ENCODE measurements at regions of chr18 and their contacts with region 1.

Region 1: DNA sequence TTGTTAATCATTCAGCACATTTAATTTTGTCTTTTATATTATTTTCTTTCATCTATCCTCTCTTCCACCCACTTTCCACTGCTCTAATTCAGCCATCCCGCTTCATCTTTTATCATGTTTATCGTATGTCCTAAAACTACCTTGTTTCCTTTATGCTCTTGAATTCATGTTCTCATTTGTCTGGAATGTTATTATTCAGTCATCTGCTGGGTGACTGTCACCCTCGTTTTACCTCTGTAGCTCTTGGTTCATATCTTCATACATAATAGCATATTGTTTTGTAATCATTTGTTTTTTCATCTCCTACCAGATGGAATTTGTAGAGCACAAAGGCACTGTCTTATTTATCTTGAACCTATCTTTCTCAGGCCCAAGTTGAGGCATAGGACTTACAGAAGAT is 37.0 kb downstream of the SMCHD1 start:
- H3K4me3 Mint-ChIP-seq: no peak overlapping the region
- H3K27ac Mint-ChIP-seq: no peak overlapping the region
- H3K4me1 Mint-ChIP-seq: peaks cover 4% of the 10 kb centered on the region
- H3K27me3 Mint-ChIP-seq: no peaks in the 10 kb centered on the region

Region 2: DNA sequence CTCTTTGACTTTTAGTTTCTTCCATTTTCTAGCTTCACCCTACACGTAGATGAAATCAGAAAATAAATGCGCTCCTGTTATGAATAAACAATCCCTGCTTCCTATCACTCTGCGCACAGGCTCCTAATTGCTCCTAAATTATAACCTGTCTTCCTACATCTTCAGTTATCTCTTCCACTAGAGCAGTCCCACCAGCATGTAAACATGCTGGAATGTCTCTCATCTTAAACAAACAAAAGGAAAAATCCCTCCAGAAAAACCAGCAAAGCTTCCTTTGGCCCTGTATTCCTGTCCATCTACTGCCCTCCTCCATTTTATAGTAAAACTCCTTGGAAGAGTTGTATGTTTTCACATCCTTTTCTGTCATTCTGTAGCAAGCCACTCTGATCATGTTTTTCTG is 49.1 kb after region 1 on chr18:
- intact Hi-C with region 1: loop called (anchors 10 kb)
- H3K4me3 Mint-ChIP-seq: no peak overlapping the region
- H3K27ac Mint-ChIP-seq: no peak overlapping the region
- H3K4me1 Mint-ChIP-seq: no peaks in the 10 kb centered on the region
- H3K27me3 Mint-ChIP-seq: no peaks in the 10 kb centered on the region